IMR-90 (cell line): ENCODE measurements at regions of chr3 and their contacts with region 1.

Region 1: GRCh38 chr3:42012935-42013690 is 51.2 kb upstream of the ULK4 start:
- DNase-seq: peak; percentile 51
- ATAC-seq: peak; percentile 95
- H3K4me3 ChIP-seq: peak overlapping the region; percentile 95
- H3K27ac ChIP-seq: peak overlapping the region; percentile 22; the same call in 1 of the 2 replicates
- H3K4me1 ChIP-seq: peaks cover 8% of the 10 kb centered on the region
- H3K27me3 ChIP-seq: no peaks in the 10 kb centered on the region
- CTCF ChIP-seq: 0 out of 2 replicates have a peak, but pooled peaks have one; percentile 8
- POLR2A ChIP-seq: no peak
- RAD21 ChIP-seq: no peak; the same call in 1 of the 2 replicates

Region 2: DNA sequence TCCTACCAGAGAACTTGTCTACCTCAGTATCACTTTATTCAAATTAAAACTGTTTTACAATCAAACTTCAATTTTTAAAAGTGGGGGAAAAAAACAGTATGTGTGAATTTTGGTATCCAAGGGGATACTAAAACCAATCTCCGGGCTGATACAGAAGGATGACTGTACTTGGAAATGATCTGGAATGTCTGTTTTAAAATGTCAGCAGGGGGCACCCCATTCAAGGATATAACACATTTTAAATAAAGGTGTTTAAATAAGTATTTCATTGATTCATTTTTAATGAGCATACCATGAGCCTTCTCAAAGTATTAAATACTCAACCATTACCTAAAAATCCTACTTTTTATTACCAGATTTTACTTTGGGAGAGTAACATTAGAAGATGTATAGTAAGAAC is 119.1 kb before region 1 on chr3:
- CTCF ChIA-PET with region 1: no interaction called
- POLR2A ChIA-PET with region 1: no interaction called
- dilution Hi-C with region 1: no loop called
- in situ Hi-C with region 1: loop called (anchors 10 kb)
- intact Hi-C with region 1: no loop called
- DNase-seq: peak; percentile 62
- ATAC-seq: peak; percentile 68
- H3K4me3 ChIP-seq: no peak overlapping the region
- H3K27ac ChIP-seq: no peak overlapping the region
- H3K4me1 ChIP-seq: no peaks in the 10 kb centered on the region
- H3K27me3 ChIP-seq: no peaks in the 10 kb centered on the region
- CTCF ChIP-seq: peak; percentile 65
- POLR2A ChIP-seq: no peak
- RAD21 ChIP-seq: peak; percentile 77

Region 3: GRCh38 chr3:41900265-41900664 is 112.8 kb before region 1 on chr3:
- CTCF ChIA-PET with region 1: no interaction called
- POLR2A ChIA-PET with region 1: no interaction called
- dilution Hi-C with region 1: no loop called
- in situ Hi-C with region 1: loop called (anchors 10 kb)
- intact Hi-C with region 1: loop called (anchors 2 kb)
- DNase-seq: peak; percentile 44
- ATAC-seq: no peak
- H3K4me3 ChIP-seq: no peak overlapping the region
- H3K27ac ChIP-seq: no peak overlapping the region
- H3K4me1 ChIP-seq: peaks cover 3% of the 10 kb centered on the region; the same call in 1 of the 2 replicates
- H3K27me3 ChIP-seq: no peaks in the 10 kb centered on the region
- CTCF ChIP-seq: no peak
- POLR2A ChIP-seq: no peak
- RAD21 ChIP-seq: no peak

Region 4: DNA sequence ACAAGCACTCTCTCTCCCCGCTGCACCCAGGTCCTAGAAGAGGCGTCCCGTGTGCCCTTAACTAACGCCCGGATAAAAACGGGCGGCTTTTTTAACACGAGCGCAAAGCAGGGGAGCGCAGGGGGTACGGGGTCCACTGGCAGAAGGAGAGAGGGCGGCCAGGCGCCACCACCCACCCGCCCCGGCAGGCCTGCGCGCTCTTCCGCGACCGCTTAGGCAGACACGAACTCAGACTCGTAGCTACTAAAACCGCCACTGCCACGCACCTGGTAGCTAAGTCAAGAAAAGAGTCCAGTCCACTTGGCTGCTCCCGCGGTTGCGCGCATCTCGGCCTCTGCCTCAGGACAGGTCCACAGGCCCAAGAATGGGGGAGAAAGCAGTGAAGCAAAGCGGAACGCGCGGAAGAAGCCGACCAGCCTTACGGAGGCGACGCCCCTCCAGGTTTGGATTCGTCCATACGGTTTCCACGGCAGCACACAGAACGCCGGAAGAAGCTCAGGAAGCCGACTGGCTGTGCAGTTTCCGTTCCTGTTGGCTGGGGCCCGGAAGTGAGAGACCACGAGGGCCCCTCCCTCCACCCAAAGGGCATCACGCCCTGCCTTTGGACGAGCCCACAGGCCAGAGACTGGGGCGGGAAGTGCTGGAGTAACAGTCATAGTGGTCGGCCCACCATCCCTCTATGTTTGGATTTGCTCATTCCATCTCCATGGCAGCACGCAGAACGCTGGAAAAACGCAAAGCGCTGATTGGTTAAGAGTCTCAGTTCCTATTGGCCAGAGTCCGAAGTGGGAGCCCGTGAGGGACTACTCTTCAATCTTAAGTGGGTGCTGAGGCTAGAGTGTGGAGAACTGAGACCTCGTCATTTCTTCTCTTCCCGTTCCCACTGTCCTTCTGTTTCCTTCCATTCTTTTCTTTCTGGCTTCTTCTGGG is 51.1 kb before region 1 on chr3 and contains the start of gene ULK4:
- CTCF ChIA-PET with region 1: no interaction called
- POLR2A ChIA-PET with region 1: no interaction called
- dilution Hi-C with region 1: no loop called
- in situ Hi-C with region 1: no loop called
- intact Hi-C with region 1: loop called (anchors 2 kb)
- DNase-seq: peak; percentile 100
- ATAC-seq: peak; percentile 94
- H3K4me3 ChIP-seq: peak within 1 kb of the TSS; percentile 52
- H3K27ac ChIP-seq: peak within 1 kb of the TSS; percentile 25
- H3K4me1 ChIP-seq: peaks cover 3% of the 10 kb centered on the region; the same call in 1 of the 2 replicates
- H3K27me3 ChIP-seq: no peaks in the 10 kb centered on the region
- CTCF ChIP-seq: no peak
- POLR2A ChIP-seq: peak; percentile 74; the same call in 1 of the 2 replicates
- RAD21 ChIP-seq: no peak
- total RNA-seq, gene ULK4: 5.0 and 10.3 TPM in 2 replicates

Region 5: GRCh38 chr3:42071904-42072592 is 58.9 kb after region 1 on chr3:
- CTCF ChIA-PET with region 1: no interaction called
- POLR2A ChIA-PET with region 1: no interaction called
- dilution Hi-C with region 1: no loop called
- in situ Hi-C with region 1: loop called (anchors 5 kb)
- intact Hi-C with region 1: loop called (anchors 5 kb)
- DNase-seq: peak; percentile 75
- ATAC-seq: peak; percentile 88
- H3K4me3 ChIP-seq: no peak overlapping the region
- H3K27ac ChIP-seq: peak overlapping the region; percentile 22
- H3K4me1 ChIP-seq: peaks cover 19% of the 10 kb centered on the region
- H3K27me3 ChIP-seq: no peaks in the 10 kb centered on the region
- CTCF ChIP-seq: no peak
- POLR2A ChIP-seq: no peak
- RAD21 ChIP-seq: no peak

Region 6: DNA sequence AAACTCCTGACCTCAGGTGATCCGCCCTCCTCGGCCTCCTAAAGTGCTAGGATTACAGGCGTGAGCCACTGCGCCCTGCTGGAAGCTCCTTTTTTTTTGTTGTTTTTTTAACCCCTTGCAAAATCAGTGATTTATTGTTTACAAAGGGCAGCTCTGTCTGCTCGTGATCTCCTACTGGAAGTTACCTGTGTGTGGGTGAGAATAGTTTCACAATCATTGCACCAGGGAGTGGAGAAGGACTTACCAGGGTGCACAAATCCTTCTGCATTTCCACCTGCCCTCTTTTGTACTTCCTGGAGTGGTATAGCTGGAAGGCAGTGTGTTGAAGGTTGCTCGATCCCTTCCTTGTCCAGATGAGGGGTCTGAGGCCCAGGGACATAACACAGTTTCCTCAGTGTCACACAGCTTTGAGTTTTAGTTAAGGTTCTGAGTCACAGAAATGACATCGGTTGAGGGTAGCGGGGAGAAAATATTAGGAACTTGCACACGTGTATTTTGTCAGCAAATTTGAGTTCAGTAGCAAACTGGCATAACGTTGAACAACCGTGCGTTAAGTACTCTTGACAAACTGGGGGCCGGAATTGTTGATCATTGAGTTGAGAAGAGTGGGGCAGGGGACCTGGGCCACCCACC is 66.7 kb after region 1 on chr3:
- CTCF ChIA-PET with region 1: no interaction called
- POLR2A ChIA-PET with region 1: no interaction called
- dilution Hi-C with region 1: no loop called
- in situ Hi-C with region 1: loop called (anchors 5 kb)
- intact Hi-C with region 1: no loop called
- DNase-seq: no peak
- ATAC-seq: no peak
- H3K4me3 ChIP-seq: no peak overlapping the region
- H3K27ac ChIP-seq: no peak overlapping the region
- H3K4me1 ChIP-seq: peaks cover 16% of the 10 kb centered on the region
- H3K27me3 ChIP-seq: no peaks in the 10 kb centered on the region
- CTCF ChIP-seq: no peak
- POLR2A ChIP-seq: no peak
- RAD21 ChIP-seq: no peak

Region 7: GRCh38 chr3:42190701-42191462 is 177.8 kb after region 1 on chr3:
- CTCF ChIA-PET with region 1: no interaction called
- POLR2A ChIA-PET with region 1: no interaction called
- dilution Hi-C with region 1: no loop called
- in situ Hi-C with region 1: no loop called
- intact Hi-C with region 1: loop called (anchors 2 kb)
- DNase-seq: peak; percentile 52
- ATAC-seq: peak; percentile 75
- H3K4me3 ChIP-seq: no peak overlapping the region
- H3K27ac ChIP-seq: no peak overlapping the region
- H3K4me1 ChIP-seq: peaks cover 4% of the 10 kb centered on the region
- H3K27me3 ChIP-seq: no peaks in the 10 kb centered on the region
- CTCF ChIP-seq: peak; percentile 74
- POLR2A ChIP-seq: no peak
- RAD21 ChIP-seq: peak; percentile 77